ENCODE measurements at regions of chr2 and their contacts with region 1.

Region 1: GRCh38 chr2:9770308-9771100 is 72.8 kb upstream of the TAF1B start:
- DNase-seq: peak; percentile 69
- ATAC-seq: peak; percentile 60
- H3K4me3 Mint-ChIP-seq: no peak overlapping the region
- H3K27ac Mint-ChIP-seq: no peak overlapping the region
- H3K4me1 Mint-ChIP-seq: peaks cover 13% of the 10 kb centered on the region
- H3K27me3 Mint-ChIP-seq: peaks cover 6% of the 10 kb centered on the region
- CTCF ChIP-seq: peak; percentile 42

Region 2: DNA sequence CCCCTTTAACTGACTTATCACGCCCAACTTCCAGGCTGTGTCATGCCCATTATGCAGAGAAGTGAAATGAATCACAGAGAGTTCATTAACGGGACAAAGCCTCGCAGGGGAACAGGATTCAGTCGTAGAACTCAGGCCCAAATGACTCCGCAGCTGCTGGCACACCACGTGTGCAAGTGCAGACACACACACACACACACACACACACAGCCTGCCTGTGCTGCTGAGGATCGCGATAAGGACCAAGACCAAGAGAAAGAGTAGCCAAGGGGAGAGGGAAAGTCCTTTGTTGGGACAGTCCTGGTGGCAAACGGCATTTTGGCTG is 17.3 kb before region 1 on chr2:
- CTCF ChIA-PET with region 1: interaction called, 34 read pairs
- POLR2A ChIA-PET with region 1: interaction called, 3 read pairs
- intact Hi-C with region 1: no loop called
- DNase-seq: peak; percentile 82
- ATAC-seq: peak; percentile 82
- H3K4me3 Mint-ChIP-seq: peak overlapping the region; percentile 32
- H3K27ac Mint-ChIP-seq: peak overlapping the region; percentile 81
- H3K4me1 Mint-ChIP-seq: peaks cover 54% of the 10 kb centered on the region
- H3K27me3 Mint-ChIP-seq: peaks cover 28% of the 10 kb centered on the region
- CTCF ChIP-seq: no peak

Measured in activated CD8-positive, alpha-beta T cell treated with anti-CD3 and anti-CD28 coated beads for 36 hours (primary cell).